Lower leg skin (tissue), 4 donors: ENCODE measurements at regions of chr12 and their contacts with region 1.

Region 1: GRCh38 chr12:123365025-123365917 is 624 bp upstream of the SBNO1 start:
- DNase-seq: peak; percentile 98 to 99
- H3K4me3 ChIP-seq: peak overlapping the region; percentile 27
- CTCF ChIP-seq: peak in 1 of 3 donors; percentile 41
- POLR2A ChIP-seq: no peak

Region 2: DNA sequence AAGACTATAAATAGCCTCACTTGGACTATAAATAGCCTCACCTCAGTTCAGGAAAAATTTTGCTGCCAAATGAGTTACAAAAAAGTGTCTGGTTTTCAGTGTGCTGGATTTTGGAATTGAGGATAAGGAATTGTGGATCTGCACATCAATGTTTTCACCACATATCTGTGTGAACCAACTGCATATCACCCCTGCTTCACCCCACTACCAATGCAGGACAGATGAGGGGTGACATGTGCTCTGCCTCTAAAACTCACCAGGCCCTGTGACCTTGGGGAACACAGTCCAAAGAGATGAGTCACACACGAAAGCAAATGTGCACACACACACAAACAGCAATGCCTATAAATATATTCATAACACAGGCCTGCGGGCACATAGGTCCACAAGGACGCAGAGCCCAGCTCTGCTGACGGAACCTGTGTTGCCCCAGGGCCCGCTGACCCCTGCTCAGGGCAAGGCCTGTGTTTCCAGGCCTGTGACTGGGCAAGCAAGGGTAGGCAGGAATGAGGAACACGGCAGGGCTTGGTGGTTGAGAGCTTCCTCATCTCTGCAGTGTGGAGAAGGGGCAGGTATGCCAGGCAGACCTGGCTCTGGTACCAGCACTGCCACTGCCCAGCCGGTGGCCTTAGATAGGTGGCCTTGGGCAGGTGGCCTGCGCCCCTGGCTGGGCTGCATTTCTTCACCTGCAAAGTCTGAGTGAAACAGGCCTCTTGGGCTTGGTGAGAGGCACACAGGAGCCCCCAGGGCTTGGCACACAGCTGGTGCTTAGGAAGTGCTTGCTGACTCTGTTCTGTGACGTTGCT is 302.4 kb before region 1 on chr12:
- intact Hi-C with region 1: no loop called
- DNase-seq: peak in 1 of 2 donors; percentile 46
- H3K4me3 ChIP-seq: no peak overlapping the region
- CTCF ChIP-seq: no peak
- POLR2A ChIP-seq: no peak

Region 3: DNA sequence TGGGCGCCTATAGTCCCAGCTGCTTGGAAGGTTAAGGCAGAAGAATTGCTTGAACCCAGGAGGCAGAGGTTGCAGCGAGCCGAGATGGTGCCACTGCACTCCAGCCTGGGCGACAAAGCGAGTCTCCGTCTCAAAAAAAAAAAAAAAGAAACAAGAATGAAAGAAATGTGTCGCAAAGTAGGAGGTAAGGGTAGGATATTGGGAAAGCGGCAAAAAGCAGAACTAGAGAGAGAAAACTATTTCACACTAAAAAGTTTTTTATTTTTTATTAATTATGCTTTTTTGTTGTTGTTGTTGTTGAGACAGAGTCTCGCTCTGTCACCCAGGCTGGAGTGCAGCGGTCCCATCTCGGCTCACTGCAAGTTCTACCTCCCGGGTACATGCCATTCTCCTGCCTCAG is 18.3 kb before region 1 on chr12:
- intact Hi-C with region 1: loop called (anchors 1 kb)
- DNase-seq: no peak
- H3K4me3 ChIP-seq: no peak overlapping the region
- CTCF ChIP-seq: no peak
- POLR2A ChIP-seq: no peak

Region 4: DNA sequence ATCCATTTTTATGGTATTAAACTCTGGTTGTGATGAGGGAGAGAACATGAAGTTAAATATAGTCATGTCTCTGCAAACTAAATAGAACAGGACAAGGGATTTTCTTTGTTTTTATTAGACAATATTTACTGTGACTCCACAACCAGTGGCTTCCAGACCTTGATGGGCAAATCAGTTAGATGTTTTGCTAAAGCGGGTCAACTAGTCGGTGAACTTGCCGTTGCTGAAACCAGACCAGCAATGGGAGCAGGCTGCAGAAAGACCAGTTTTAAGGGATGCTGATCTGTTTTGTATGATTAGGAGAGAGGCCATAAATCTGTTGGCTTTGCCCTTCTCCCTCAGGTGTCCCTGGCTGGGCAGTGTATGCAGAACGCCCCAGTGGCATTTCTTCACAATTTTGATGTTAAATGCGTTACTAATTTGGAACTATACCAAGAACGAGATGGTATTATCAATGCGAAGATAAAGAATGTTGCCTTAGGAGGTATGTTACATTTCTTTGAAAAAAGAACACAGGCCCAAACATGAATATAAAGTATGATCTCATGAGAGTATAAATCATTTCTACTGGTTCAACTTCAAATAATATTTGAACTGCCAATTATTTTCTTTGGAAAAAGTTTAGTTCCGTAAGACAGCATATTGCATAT is 325.0 kb after region 1 on chr12:
- intact Hi-C with region 1: no loop called
- DNase-seq: no peak
- H3K4me3 ChIP-seq: no peak overlapping the region
- CTCF ChIP-seq: no peak
- POLR2A ChIP-seq: no peak